ENCODE measurements at regions of chr1 and their contacts with region 1.

Region 1: GRCh38 chr1:212188599-212189351 is 96.4 kb upstream of the PPP2R5A start:
- DNase-seq: no peak
- ATAC-seq: no peak

Region 2: DNA sequence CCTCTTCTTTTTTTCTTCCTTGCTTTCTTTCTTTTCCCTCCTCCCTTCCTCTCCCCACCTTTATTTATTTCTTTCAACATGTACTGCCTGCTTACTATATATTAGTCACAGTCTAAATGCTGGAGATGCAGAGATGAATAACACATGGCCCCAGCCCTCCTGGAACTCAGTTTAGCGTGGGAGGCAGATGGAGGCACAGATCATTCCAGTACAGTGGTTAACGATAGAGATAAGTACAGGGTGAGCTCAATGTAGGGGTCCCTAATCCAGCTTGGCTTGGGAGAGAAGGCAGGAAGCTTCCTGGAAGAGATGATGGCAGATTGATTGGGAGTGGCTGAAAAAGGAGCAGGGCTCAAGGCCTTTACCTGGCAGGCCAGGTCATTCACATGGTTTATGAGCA is 40.9 kb after region 1 on chr1:
- intact Hi-C with region 1: loop called (anchors 1 kb)
- DNase-seq: no peak
- ATAC-seq: no peak

Region 3: DNA sequence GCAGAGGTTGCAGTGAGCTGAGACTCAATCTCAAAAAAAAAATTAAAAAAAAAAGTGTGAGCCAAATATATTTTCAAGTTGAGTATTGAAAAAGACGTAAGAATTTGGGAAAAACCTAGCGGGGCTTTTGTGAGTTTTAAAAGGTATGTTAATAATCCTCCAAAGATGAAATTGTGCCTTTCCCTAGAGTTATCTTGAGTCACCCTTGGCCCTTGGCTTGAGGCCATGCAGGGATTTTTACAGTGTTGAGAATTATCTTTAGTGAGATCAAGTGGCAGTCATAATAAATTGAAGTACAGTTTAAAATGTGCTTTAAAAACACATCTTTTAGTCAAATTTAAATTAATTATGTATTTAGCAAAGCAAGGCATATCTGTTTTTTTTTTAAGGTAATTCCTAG is 129.1 kb after region 1 on chr1:
- intact Hi-C with region 1: no loop called
- DNase-seq: no peak
- ATAC-seq: no peak

Measured in Right ventricle myocardium inferior (tissue), 1 donor.